ENCODE measurements at regions of chr10 and their contacts with region 1.

Region 1: GRCh38 chr10:73552819-73553715 is 38.1 kb downstream of the USP54 start:
- DNase-seq: peak; percentile 44 to 94 (median 84)
- H3K4me3 ChIP-seq: peak overlapping the region in 34 of 59 donors; percentile 1 to 46 (median 18)
- H3K27ac ChIP-seq: peak overlapping the region; percentile 80 to 99 (median 96)
- H3K27me3 ChIP-seq: no peaks in the 10 kb centered on the region
- CTCF ChIP-seq: peak in 6 of 56 donors; percentile 6 to 34 (median 16)

Region 2: DNA sequence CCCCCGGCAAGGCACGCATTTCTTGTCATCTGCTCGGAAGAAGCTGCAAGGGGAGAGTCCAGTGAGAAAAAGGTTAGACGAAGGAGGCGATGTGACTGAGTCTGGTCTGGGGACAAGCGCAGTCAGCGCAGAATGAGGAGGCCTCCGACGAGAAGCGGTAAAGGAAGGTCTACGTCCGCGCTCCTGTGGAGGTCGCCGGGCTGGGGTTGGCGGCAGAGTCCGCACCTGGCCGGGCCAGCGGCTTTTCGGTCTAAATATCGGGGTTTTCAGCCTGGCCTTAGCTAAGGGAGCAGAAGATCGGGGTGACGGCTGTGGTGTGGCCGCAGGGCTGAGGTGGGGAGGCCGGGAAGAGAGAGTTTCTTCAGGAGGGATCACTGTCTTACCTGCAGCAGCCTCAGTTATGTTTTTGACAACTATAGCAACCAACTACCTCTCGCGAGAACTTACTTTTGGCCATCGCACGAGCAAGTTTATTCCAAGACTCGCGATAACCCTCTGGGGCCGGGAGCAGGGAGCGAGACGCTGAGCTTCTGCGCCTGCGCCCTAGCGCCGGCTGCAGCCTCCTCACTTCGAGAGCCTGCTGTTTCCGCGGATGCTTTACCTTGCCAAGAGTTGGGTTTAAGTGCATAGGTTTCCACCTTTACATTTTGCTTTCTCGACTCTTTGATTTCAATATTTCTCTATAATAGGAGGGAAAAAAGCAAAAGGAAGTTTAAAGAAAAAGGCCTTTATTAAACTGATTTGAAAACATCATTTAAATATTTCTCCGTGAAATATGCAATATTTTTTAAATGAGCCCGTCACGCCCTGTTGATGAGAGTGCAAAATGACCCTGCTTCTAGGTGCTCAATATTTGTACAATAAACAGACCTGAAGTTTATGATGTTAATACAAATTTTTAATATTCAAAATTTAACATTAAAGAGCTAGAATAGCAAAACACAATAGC is 194.5 kb before region 1 on chr10 and contains the start of gene CFAP70:
- intact Hi-C with region 1: no loop called
- DNase-seq: peak; percentile 78 to 93 (median 90)
- H3K4me3 ChIP-seq: peak within 1 kb of the TSS; percentile 60 to 96 (median 83)
- H3K27ac ChIP-seq: peak within 1 kb of the TSS in 55 of 59 donors; percentile 11 to 91 (median 77)
- H3K27me3 ChIP-seq: no peaks in the 10 kb centered on the region
- CTCF ChIP-seq: peak in 18 of 56 donors; percentile 5 to 42 (median 23)
- total RNA-seq, gene CFAP70: 4.8 to 20.1 (median 8.8) TPM

Region 3: GRCh38 chr10:73586583-73586984 is 33.5 kb after region 1 on chr10:
- intact Hi-C with region 1: loop called (anchors 2 to 5 kb)
- DNase-seq: no peak
- H3K4me3 ChIP-seq: peak overlapping the region in 39 of 59 donors; percentile 1 to 69 (median 29)
- H3K27ac ChIP-seq: peak overlapping the region in 58 of 59 donors; percentile 47 to 99 (median 95)
- H3K27me3 ChIP-seq: no peaks in the 10 kb centered on the region
- CTCF ChIP-seq: no peak

Region 4: DNA sequence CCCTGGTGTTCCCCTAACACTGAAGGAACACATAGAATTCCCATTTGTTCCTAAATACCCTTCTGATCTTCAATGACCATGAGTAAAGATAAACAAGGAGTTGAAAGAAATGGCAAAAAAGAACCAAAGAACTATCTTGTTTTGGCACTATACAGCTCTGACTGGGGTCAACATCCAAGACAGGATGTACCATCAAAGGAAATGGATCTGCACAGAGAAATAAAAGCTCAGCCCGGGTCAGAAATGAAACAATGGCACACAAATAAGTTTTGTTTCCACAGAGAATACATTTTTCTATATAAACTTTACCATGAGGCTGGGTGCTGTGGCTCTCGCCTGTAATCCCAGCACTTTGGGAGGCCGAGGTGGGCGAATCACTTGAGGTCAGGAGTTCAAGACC is 56.0 kb after region 1 on chr10:
- intact Hi-C with region 1: no loop called
- DNase-seq: no peak
- H3K4me3 ChIP-seq: no peak overlapping the region
- H3K27ac ChIP-seq: no peak overlapping the region
- H3K27me3 ChIP-seq: no peaks in the 10 kb centered on the region
- CTCF ChIP-seq: no peak

Region 5: DNA sequence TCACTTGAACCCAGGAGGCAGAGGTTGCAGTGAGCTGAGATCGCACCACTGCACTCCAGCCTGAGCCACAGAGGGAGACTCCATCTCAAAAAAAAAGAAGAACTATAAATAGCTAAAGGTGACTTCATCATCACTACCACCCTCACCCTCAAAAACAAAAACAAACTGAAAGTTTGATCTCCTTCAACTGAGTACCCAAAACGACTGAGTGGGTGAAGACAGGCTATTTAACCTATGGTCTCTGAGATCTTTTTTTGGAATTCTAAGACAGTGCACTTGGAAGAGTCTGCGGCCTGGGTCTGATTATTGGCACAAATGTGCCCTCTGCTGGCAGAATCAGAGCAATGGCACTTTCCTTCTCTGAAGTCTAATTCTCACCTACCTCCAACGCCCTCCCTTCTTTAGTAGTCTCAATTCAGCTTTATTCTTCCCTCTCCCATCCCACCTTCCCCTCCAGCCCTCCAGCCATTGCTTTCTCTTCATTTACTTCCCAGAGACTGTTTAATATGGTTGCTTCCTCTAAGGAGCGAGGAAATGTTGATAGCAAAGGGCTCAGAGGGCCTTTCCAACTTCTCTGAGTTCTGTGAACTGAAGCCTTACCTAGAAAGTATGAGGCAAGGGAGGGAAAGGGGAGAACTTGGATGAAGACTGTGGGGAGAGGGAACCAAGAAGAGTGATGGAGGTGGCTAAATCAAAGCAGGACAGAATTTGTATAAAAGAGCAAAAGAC is 91.1 kb after region 1 on chr10:
- intact Hi-C with region 1: no loop called
- DNase-seq: peak in 8 of 10 donors; percentile 41 to 70 (median 64)
- H3K4me3 ChIP-seq: peak overlapping the region in 8 of 59 donors; percentile 4 to 40 (median 20)
- H3K27ac ChIP-seq: peak overlapping the region in 5 of 59 donors; percentile 2 to 73 (median 28)
- H3K27me3 ChIP-seq: no peaks in the 10 kb centered on the region
- CTCF ChIP-seq: peak; percentile 86 to 99 (median 94)